ENCODE measurements at regions of chr5 and their contacts with region 1.

Region 1: DNA sequence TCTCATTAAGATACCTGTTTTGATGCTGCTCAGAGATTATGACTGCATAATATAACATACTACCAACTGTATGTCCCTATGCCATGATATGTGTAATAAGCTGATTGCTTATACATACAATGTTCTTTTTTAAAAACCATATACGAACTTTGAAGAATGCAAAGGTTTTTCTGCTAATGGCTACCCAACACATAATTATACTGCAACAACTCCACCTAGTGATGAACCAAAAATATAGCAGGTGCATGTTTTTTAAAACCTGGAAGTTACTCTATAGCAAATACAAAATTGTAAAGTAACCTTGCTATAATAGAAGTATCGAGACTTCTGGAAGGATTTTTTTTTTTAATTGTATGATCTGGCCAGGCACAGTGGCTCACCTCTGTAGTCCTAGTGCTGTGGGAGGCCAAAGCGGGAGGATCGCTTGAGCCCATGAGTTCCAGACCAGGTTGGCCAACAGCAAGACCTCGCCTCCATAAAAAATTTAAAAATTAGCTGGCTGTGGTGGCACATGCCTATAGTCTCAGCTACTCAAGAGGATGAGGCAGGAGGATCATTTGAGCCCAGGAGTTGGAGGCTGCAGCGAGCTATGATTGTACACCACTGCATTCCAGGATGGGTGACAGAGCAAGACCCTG is 49.1 kb downstream of the HOMER1 start:
- DNase-seq: no peak
- H3K4me3 Mint-ChIP-seq: no peak overlapping the region
- H3K27ac Mint-ChIP-seq: no peak overlapping the region
- H3K4me1 Mint-ChIP-seq: peaks cover 4% of the 10 kb centered on the region
- H3K27me3 Mint-ChIP-seq: peaks cover 7% of the 10 kb centered on the region

Region 2: DNA sequence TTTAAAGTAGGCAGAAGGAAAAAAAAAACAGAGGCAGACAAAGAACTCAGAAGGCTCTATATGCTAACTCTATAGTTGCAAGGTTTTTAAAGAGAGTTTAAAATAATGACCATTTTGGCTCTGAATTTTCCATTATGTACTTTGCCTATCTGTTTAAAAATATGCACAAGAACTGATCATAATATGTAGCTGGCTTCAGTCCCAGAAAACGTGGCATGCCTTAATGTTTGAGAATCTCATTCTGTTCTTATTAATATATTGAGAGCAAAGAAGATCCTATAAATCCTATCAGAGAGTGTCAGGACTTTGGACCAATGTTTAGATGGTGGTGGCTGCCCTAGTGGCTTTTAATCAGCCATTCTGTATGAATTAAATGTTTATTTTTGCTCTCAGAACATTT is 107.4 kb before region 1 on chr5:
- intact Hi-C with region 1: loop called (anchors 10 kb)
- DNase-seq: no peak
- H3K4me3 Mint-ChIP-seq: no peak overlapping the region
- H3K27ac Mint-ChIP-seq: no peak overlapping the region
- H3K4me1 Mint-ChIP-seq: no peaks in the 10 kb centered on the region
- H3K27me3 Mint-ChIP-seq: no peaks in the 10 kb centered on the region

Region 3: GRCh38 chr5:79484731-79485130 is 19.9 kb after region 1 on chr5:
- intact Hi-C with region 1: no loop called
- DNase-seq: no peak
- H3K4me3 Mint-ChIP-seq: no peak overlapping the region
- H3K27ac Mint-ChIP-seq: no peak overlapping the region
- H3K4me1 Mint-ChIP-seq: no peaks in the 10 kb centered on the region
- H3K27me3 Mint-ChIP-seq: peaks cover 4% of the 10 kb centered on the region